Mammary epithelial cell (primary cell): ENCODE measurements at regions of chr15 and their contacts with region 1.

Region 1: GRCh38 chr15:29568838-29569532 is 253.3 kb downstream of the TJP1 start:
- DNase-seq: peak; percentile 26
- H3K4me3 ChIP-seq: no peak overlapping the region
- H3K27ac ChIP-seq: no peak overlapping the region
- H3K4me1 ChIP-seq: peaks cover 8% of the 10 kb centered on the region
- H3K27me3 ChIP-seq: peaks cover 30% of the 10 kb centered on the region
- CTCF ChIP-seq: peak; percentile 9 to 43

Region 2: DNA sequence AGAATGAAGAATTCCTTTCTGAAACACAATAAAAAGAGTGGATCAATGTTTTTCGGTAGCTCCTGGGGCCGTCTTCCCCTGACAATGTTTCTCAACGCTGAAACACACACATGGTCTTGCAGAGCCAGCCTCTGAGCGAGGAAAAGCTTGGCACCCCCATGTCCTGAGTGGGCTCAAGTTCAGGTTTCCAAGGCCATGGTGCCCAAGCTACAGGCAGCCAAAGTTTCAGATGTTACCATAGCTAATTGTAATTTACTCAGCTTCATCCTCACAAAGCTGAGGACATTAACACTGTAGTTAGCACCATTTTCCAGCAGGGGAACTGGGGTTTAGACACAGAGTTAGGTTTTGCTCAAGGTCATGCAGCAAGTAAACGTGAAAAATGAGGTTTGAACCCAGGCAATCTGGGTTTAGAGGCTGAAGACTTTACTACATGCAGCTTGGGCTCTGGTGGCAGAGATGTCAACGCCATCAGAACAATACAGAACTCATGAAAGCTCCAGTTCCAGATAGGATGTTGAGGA is 54.2 kb after region 1 on chr15:
- CTCF ChIA-PET with region 1: no interaction called
- dilution Hi-C with region 1: no loop called
- in situ Hi-C with region 1: loop called in 1 of 2 experiments (anchors 10 kb)
- intact Hi-C with region 1: no loop called
- DNase-seq: no peak
- H3K4me3 ChIP-seq: no peak overlapping the region
- H3K27ac ChIP-seq: no peak overlapping the region
- H3K4me1 ChIP-seq: no peaks in the 10 kb centered on the region
- H3K27me3 ChIP-seq: no peaks in the 10 kb centered on the region
- CTCF ChIP-seq: no peak